Caco-2 (cell line): ENCODE measurements at regions of chr10 and their contacts with region 1.

Region 1: GRCh38 chr10:85642421-85643170 is 724.0 kb downstream of the GRID1 start:
- DNase-seq: peak; percentile 58 to 72
- H3K4me3 ChIP-seq: no peak overlapping the region
- H3K4me3 Mint-ChIP-seq: peak overlapping the region; percentile 37
- H3K27ac Mint-ChIP-seq: peak overlapping the region; percentile 90
- H3K4me1 ChIP-seq: peaks cover 53% of the 10 kb centered on the region
- H3K4me1 Mint-ChIP-seq: peaks cover 36% of the 10 kb centered on the region
- H3K27me3 ChIP-seq: no peaks in the 10 kb centered on the region
- H3K27me3 Mint-ChIP-seq: no peaks in the 10 kb centered on the region
- CTCF ChIP-seq: no peak

Region 2: DNA sequence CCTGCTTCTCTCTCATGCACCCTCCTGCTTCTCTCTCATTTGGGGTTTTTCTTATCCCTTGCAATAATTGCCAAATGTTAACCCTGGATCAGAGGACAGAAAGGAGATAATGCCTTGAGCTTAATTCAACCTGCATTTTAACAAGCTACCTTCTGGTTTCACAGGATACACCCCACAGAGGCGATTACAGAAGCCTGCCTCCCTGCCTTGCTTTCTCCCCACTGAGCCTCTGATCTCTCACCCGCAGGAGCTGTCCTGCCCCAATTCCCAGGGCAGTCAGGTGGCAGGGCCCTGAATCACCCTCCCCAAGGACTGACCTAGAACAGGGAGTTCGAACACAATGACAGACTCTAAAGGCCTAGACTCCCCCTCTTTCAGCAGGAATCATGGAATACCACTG is 235.5 kb before region 1 on chr10:
- CTCF ChIA-PET with region 1: no interaction called
- POLR2A ChIA-PET with region 1: no interaction called
- intact Hi-C with region 1: loop called (anchors 2 kb)
- DNase-seq: no peak
- H3K4me3 ChIP-seq: no peak overlapping the region
- H3K4me3 Mint-ChIP-seq: no peak overlapping the region
- H3K27ac Mint-ChIP-seq: peak overlapping the region; percentile 60
- H3K4me1 ChIP-seq: peaks cover 25% of the 10 kb centered on the region
- H3K4me1 Mint-ChIP-seq: peaks cover 19% of the 10 kb centered on the region
- H3K27me3 ChIP-seq: no peaks in the 10 kb centered on the region
- H3K27me3 Mint-ChIP-seq: no peaks in the 10 kb centered on the region
- CTCF ChIP-seq: no peak

Region 3: GRCh38 chr10:85430991-85431390 is 211.6 kb before region 1 on chr10:
- CTCF ChIA-PET with region 1: no interaction called
- POLR2A ChIA-PET with region 1: no interaction called
- intact Hi-C with region 1: loop called (anchors 10 kb)
- DNase-seq: no peak
- H3K4me3 ChIP-seq: no peak overlapping the region
- H3K4me3 Mint-ChIP-seq: no peak overlapping the region
- H3K27ac Mint-ChIP-seq: no peak overlapping the region
- H3K4me1 ChIP-seq: no peaks in the 10 kb centered on the region
- H3K4me1 Mint-ChIP-seq: peaks cover 7% of the 10 kb centered on the region
- H3K27me3 ChIP-seq: no peaks in the 10 kb centered on the region
- H3K27me3 Mint-ChIP-seq: no peaks in the 10 kb centered on the region
- CTCF ChIP-seq: no peak